ENCODE measurements at regions of chr9 and their contacts with region 1.

Region 1: DNA sequence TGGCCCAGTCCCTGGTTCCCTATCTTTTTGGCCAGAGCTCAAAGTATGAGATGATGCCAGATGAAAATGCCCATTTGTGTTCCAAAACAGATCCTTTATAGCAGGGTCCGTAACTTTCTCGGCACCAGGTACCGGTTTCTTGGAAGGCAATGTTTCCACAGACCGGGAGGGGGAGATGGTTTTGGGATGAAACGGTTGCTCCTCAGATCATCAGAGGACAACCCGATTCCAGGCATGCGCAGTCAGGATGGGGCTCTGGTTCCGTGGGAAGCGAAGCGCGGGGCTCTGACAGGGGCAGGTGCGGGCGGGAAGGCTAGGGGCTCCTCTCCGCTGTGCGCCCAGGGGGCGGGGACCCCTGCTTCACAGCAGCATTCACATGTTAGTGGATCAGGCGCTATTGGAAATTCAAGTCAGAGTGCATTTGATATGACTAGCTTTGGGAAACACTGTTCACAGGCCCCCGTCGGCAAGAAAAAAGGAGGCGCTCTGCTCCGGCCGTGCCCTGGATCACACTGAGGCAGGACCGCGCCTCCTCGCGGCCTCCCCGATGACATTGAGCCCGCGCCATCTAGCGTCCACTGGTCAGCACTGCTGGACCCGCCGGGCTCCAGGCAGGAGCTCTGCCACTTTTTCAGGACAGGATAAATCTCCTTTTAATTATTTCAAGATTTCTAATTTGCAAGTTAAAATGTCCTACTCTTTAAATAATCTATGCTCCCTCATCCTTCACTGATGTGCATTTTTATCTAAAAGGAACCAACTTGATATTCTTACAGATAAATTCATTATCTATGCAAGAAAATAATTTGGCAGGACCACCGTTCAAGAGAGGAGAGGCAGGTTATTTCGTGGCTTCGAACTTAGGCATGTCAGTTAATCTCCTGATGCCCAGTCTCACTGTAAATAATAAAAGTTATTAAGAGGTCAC is 190.0 kb downstream of the FANCC start:
- DNase-seq: peak; percentile 56
- H3K4me3 Mint-ChIP-seq: no peak overlapping the region
- H3K27ac Mint-ChIP-seq: no peak overlapping the region
- H3K4me1 Mint-ChIP-seq: peaks cover 7% of the 10 kb centered on the region
- H3K27me3 Mint-ChIP-seq: no peaks in the 10 kb centered on the region

Region 2: GRCh38 chr9:94672811-94673487 is 454.6 kb before region 1 on chr9:
- intact Hi-C with region 1: loop called (anchors 1 kb)
- DNase-seq: no peak
- H3K4me3 Mint-ChIP-seq: no peak overlapping the region
- H3K27ac Mint-ChIP-seq: no peak overlapping the region
- H3K4me1 Mint-ChIP-seq: peaks cover 11% of the 10 kb centered on the region
- H3K27me3 Mint-ChIP-seq: peaks cover 12% of the 10 kb centered on the region

Region 3: DNA sequence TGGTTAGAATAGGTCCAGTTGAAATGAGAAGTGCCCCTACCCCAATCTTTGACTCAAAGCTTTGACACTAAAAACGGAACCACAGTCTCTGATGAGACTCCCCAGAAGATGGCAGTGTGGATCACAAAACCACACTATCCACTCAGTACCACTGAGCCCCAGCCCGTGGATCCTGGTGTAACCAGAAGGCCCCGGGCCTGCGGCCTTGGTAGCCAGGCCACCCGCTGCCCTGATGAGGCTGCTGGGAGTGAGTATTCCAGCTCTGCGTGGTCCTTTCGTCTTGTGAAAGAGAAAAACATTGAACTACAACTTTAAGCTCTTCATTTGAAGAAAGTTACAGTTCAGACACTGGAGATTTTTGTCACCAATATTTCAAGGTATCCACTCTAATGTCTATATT is 446.0 kb before region 1 on chr9:
- intact Hi-C with region 1: loop called (anchors 1 kb)
- DNase-seq: peak; percentile 43
- H3K4me3 Mint-ChIP-seq: no peak overlapping the region
- H3K27ac Mint-ChIP-seq: no peak overlapping the region
- H3K4me1 Mint-ChIP-seq: no peaks in the 10 kb centered on the region
- H3K27me3 Mint-ChIP-seq: peaks cover 27% of the 10 kb centered on the region

Region 4: GRCh38 chr9:94783102-94783664 is 344.3 kb before region 1 on chr9:
- intact Hi-C with region 1: loop called (anchors 1 kb)
- DNase-seq: peak; percentile 11
- H3K4me3 Mint-ChIP-seq: no peak overlapping the region
- H3K27ac Mint-ChIP-seq: no peak overlapping the region
- H3K4me1 Mint-ChIP-seq: peaks cover 20% of the 10 kb centered on the region
- H3K27me3 Mint-ChIP-seq: no peaks in the 10 kb centered on the region

Region 5: DNA sequence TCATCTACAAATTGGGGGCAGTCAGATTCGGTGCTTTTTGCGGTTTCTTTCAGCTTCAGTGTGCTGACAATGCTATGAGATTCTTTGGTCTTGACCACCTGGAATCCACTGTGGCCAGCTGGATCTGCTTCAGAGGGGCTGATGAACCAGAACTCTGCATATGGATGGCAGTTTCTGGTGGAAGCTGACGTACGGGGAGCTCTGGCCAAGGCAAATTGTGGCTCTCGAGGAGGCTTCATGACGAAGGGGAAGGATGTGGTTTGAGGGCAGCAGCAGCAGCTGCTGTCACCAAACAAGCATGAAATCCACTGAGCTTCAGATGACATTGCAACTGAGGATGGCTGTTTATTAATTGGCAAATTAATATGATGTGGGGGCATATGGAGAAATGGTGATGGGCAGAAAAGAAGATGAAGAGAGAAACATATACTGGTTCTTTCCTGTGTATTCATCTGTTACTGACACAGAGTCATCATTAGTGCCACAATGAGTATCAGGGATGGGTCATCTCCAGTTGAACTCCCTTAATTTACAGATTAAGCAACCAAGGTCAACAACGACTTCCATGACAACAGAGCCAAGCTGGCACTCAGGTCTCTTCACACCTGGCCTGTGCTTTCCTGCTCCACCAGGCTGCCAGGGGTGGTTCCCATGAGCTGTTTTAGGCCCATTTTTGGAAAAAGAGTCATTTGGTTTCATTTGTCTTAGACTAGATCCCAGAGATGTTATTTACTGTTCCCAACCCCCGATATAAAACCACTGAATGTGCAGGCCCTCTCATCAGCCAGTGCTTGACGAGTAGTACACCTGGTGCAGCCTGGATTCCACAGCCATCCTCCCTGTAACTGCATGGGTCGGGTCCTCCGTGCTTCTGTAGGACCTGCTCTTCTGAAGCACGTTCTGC is 266.3 kb before region 1 on chr9:
- intact Hi-C with region 1: loop called (anchors 5 kb)
- DNase-seq: peak; percentile 70
- H3K4me3 Mint-ChIP-seq: peak overlapping the region; percentile 73
- H3K27ac Mint-ChIP-seq: peak overlapping the region; percentile 83
- H3K4me1 Mint-ChIP-seq: peaks cover 48% of the 10 kb centered on the region
- H3K27me3 Mint-ChIP-seq: no peaks in the 10 kb centered on the region

Region 6: GRCh38 chr9:94980947-94981722 is 146.4 kb before region 1 on chr9:
- intact Hi-C with region 1: no loop called
- DNase-seq: no peak
- H3K4me3 Mint-ChIP-seq: no peak overlapping the region
- H3K27ac Mint-ChIP-seq: no peak overlapping the region
- H3K4me1 Mint-ChIP-seq: peaks cover 14% of the 10 kb centered on the region
- H3K27me3 Mint-ChIP-seq: peaks cover 2% of the 10 kb centered on the region

Region 7: DNA sequence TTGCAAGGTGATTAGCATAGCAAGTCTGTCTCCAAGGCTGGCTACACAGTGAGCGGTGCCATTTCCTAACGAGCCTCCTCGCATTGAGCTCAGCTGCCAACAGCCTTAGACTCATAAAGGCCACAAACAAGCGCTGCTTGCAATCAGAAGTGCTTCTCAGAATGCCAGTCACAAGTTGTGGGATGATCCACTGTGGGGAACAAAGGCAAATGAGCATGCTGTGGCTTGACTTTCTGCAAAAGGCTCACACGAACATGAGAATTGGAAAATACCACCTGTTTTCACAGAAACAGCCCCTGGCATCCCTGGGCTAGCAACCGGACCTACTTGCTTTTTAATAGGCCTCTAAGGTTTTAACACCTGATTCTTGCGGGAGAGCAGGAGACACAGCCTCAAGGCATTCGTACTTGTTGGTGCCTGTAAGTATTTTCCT is 25.5 kb before region 1 on chr9:
- intact Hi-C with region 1: no loop called
- DNase-seq: no peak
- H3K4me3 Mint-ChIP-seq: no peak overlapping the region
- H3K27ac Mint-ChIP-seq: no peak overlapping the region
- H3K4me1 Mint-ChIP-seq: no peaks in the 10 kb centered on the region
- H3K27me3 Mint-ChIP-seq: no peaks in the 10 kb centered on the region

Region 8: DNA sequence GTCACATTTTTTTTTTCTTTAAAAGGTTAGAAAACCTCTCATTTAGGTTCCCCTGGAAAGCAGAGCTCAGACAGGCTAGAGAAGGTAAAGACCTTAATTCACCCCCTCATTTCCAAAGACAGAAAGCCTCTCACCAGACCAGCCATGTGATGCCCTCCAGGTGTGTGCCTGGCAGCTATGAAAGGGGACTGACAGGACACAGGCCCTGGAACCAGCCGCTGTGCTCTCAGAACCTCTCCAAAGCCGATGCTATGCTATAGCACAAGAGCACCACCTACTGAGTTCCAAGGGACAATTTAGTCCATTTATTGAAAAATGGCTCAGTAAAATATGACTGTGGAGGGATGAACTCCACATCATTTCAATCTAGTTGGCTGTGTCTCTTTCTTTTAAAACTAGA is 141.2 kb after region 1 on chr9:
- intact Hi-C with region 1: loop called (anchors 1 kb)
- DNase-seq: peak; percentile 2
- H3K4me3 Mint-ChIP-seq: no peak overlapping the region
- H3K27ac Mint-ChIP-seq: no peak overlapping the region
- H3K4me1 Mint-ChIP-seq: peaks cover 62% of the 10 kb centered on the region
- H3K27me3 Mint-ChIP-seq: peaks cover 2% of the 10 kb centered on the region

Region 9: DNA sequence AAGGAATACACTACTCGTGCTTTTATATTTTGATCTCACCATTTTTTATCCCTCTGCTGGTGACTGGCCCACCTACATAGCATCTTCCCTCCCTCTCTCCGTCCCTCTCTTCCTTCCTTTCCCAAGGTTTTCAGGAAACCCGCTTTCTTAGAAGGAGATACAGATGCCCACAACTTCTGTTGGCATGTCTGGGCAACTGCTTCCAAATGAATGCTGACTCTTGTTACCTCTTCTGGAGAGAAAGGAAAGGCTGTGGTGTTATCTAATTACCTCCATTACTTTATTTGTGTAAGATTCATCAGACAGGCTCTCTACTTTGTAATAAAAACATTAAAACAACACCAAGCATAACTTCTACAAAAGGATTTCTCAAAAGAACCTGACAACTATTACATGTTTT is 169.8 kb after region 1 on chr9:
- intact Hi-C with region 1: no loop called
- DNase-seq: no peak
- H3K4me3 Mint-ChIP-seq: no peak overlapping the region
- H3K27ac Mint-ChIP-seq: no peak overlapping the region
- H3K4me1 Mint-ChIP-seq: peaks cover 1% of the 10 kb centered on the region
- H3K27me3 Mint-ChIP-seq: no peaks in the 10 kb centered on the region